ENCODE measurements at regions of chr2 and their contacts with region 1.

Region 1: GRCh38 chr2:135531231-135532228 is at the start of gene R3HDM1:
- DNase-seq: peak; percentile 96
- H3K4me3 Mint-ChIP-seq: no peak within 1 kb of the TSS
- H3K27ac Mint-ChIP-seq: no peak within 1 kb of the TSS
- H3K4me1 Mint-ChIP-seq: peaks cover 27% of the 10 kb centered on the region
- H3K27me3 Mint-ChIP-seq: no peaks in the 10 kb centered on the region
- total RNA-seq, gene R3HDM1: 47.8 and 49.2 TPM in 2 replicates

Region 2: GRCh38 chr2:134918526-134919340 is 612.8 kb before region 1 on chr2 and contains the start of gene CCNT2:
- intact Hi-C with region 1: loop called (anchors 1 kb)
- DNase-seq: peak; percentile 100
- H3K4me3 Mint-ChIP-seq: peak within 1 kb of the TSS; percentile 99
- H3K27ac Mint-ChIP-seq: peak within 1 kb of the TSS; percentile 98
- H3K4me1 Mint-ChIP-seq: peaks cover 20% of the 10 kb centered on the region
- H3K27me3 Mint-ChIP-seq: peaks cover 3% of the 10 kb centered on the region
- total RNA-seq, gene CCNT2: 39.2 and 41.0 TPM in 2 replicates

Region 3: DNA sequence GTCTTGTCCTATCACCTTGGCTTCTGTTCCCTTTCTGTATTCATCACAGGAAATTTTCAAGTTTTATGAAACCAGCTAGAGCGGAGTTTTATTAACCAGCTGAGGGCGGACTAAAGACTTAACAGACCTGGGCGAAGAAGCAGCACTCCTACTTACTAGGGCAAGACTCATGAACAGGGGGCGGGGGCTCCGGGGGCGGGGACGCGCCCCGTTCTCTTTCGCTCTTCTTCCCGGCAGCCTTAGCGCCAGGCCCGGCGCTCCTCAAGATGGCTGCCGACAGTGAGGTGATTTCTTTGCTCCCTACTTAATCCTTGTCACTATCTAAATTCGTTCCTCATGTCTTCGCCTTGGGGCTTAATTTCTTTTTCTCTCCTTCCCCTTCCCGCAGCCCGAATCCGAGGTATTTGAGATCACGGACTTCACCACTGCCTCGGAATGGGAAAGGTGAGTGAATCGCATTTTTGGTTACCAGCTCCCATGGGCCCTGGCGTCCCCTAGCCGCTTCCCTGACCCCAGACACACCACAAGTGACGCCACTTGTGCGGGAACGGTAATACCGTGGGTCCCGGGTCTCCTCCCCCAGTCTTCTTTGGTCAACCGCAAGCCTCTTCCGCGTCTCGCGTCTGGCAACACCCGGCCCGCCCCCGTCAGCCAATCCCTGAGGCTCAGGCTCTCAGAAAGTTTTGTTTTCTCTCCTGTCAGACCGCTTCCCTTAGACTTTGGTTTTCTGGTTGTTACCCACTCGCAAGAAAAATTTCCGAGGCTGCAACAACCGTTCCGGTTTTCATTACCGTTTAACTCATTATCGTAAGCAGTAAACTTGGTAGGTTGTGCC is 479.3 kb before region 1 on chr2 and contains the start of gene RAB3GAP1:
- intact Hi-C with region 1: loop called (anchors 1 kb)
- DNase-seq: peak; percentile 91
- H3K4me3 Mint-ChIP-seq: peak within 1 kb of the TSS; percentile 96
- H3K27ac Mint-ChIP-seq: peak within 1 kb of the TSS; percentile 100
- H3K4me1 Mint-ChIP-seq: peaks cover 47% of the 10 kb centered on the region
- H3K27me3 Mint-ChIP-seq: no peaks in the 10 kb centered on the region
- total RNA-seq, gene RAB3GAP1: 26.6 and 30.8 TPM in 2 replicates

Region 4: DNA sequence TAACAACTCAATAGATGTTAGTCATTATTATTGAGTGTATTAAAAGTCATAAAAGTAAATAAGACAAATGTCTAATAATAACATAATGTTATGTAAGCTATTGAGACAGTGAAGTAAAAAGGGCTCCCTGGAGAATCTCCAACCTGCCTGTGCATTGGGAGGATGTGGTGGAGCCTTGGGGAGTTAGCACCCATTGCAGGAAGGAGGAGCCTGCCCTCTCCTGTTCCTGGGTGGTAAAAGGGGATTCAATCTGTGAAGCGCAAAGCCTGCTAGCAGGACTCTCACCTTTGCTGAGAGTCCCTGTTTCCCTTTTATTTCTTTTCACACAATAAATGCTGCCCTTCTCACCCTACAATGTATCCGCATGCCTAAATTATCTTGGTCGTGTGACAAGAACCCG is 273.3 kb before region 1 on chr2:
- intact Hi-C with region 1: no loop called
- DNase-seq: no peak
- H3K4me3 Mint-ChIP-seq: no peak overlapping the region
- H3K27ac Mint-ChIP-seq: no peak overlapping the region
- H3K4me1 Mint-ChIP-seq: no peaks in the 10 kb centered on the region
- H3K27me3 Mint-ChIP-seq: no peaks in the 10 kb centered on the region

Region 5: GRCh38 chr2:135546436-135546835 is 14.9 kb after region 1 on chr2:
- intact Hi-C with region 1: loop called (anchors 1 kb)
- DNase-seq: no peak
- H3K4me3 Mint-ChIP-seq: no peak overlapping the region
- H3K27ac Mint-ChIP-seq: no peak overlapping the region
- H3K4me1 Mint-ChIP-seq: peaks cover 22% of the 10 kb centered on the region
- H3K27me3 Mint-ChIP-seq: peaks cover 2% of the 10 kb centered on the region

Region 6: DNA sequence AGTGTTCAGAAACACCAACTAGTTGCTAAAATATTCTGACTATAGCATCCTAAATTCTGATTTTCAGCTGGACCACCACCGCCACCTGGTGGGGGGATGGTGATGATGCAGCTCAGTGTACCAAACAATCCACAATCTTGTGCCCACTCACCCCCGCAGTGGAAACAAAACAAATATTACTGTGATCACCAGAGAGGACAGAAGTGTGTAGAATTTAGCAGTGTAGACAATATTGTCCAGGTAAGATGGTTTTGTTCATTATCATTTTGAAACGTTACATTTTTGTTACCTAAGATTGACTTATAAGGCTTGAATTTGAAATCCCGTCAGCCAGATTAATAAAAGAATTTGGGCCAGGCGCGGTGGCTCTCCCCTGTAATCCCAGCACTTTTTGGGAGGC is 178.5 kb after region 1 on chr2:
- intact Hi-C with region 1: loop called (anchors 10 kb)
- DNase-seq: peak; percentile 46
- H3K4me3 Mint-ChIP-seq: no peak overlapping the region
- H3K27ac Mint-ChIP-seq: no peak overlapping the region
- H3K4me1 Mint-ChIP-seq: peaks cover 3% of the 10 kb centered on the region
- H3K27me3 Mint-ChIP-seq: no peaks in the 10 kb centered on the region

Region 7: GRCh38 chr2:135820003-135820618 is 288.6 kb after region 1 on chr2:
- intact Hi-C with region 1: loop called (anchors 5 kb)
- DNase-seq: peak; percentile 80
- H3K4me3 Mint-ChIP-seq: peak overlapping the region; percentile 71
- H3K27ac Mint-ChIP-seq: peak overlapping the region; percentile 87
- H3K4me1 Mint-ChIP-seq: peaks cover 39% of the 10 kb centered on the region
- H3K27me3 Mint-ChIP-seq: no peaks in the 10 kb centered on the region